ENCODE measurements at regions of chr17 and their contacts with region 1.

Region 1: DNA sequence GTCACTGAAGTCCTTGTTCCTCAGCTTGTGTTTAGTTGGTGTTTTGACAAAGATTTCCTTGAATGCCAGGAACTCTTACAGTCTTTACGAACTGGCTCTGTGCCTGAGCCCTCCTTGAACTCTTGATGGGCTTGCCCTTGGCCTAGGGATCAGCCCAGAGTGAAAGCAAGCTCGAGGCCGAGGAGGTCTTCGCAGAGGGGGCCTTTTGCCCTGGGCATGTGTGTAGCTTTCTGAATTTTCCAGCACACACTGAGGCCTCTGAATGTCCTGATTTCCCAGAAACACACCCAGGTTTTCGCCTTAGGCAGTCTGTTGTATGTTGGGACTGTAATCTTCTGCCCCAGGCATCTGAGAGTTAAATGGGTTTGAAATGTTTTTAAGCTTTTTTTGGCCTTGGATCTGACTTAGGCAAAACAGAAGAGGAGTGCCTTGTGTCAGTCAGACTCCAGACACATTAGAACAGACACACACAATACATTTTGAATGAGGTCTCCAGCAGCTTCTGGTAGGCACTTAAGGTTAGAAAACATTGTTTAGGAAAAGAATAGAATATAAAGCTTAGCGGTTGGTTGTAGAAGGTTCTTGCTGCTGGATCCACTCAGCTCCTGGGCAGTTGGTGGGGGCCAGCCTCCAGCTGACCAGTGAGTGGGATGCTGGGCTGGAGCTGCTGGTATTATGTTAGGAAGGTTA is 17.1 kb downstream of the FOXK2 start:
- DNase-seq: no peak
- ATAC-seq: no peak
- H3K4me3 Mint-ChIP-seq: peak overlapping the region in 4 of 10 donors; percentile 9 to 48 (median 36)
- H3K27ac Mint-ChIP-seq: peak overlapping the region in 6 of 10 donors; percentile 17 to 73 (median 44)
- H3K4me1 Mint-ChIP-seq: peaks cover 33 to 67% (median 62%) of the 10 kb centered on the region in 4 donors
- H3K27me3 Mint-ChIP-seq: no peaks in the 10 kb centered on the region

Region 2: DNA sequence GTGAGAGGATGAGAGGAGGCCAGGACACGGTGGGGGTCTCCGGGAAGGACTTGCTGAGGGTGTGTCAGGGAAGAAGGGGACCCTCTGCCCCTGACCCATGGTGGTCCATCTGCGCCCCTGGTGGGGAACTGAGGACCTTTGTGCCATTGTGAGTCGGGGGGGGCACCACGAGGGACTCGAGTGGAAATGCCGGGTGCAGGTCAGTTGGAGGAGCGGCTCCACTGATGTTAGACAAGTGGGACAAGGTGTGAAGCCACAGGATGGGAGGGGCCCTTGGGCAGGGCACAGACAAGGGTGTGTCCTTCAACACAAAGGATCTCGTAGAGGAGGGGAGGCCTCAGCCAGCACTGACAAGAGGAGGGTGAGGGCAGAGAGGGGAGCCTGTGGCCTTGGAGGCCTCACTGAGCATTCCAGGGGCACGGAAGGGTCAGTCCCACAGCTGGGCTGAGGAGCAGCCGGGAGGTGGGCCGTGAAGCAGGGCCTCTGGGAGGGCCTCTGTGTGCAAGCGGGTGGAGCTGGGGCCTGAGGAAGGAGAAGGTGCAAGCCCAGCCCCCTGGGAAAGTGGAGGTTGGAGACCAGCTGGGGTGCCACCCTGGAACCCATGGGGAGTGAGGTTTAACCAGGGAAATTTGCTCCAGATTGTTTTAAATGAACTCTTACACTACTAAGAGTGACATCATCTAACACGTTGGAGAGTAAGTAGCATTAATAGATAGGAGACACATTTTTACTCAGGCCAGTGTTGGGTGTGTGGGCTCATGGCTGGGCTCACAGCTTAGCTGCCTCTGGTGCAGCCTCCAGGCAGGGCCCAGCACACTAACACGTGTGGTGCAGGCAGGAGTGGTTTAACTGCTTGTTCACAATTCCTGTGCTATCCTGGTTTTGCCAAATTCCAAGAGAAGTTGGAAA is 50.2 kb before region 1 on chr17:
- POLR2A ChIA-PET with region 1: no interaction called
- DNase-seq: no peak
- ATAC-seq: no peak
- H3K4me3 Mint-ChIP-seq: no peak overlapping the region
- H3K27ac Mint-ChIP-seq: peak overlapping the region in 6 of 10 donors; percentile 20 to 83 (median 45)
- H3K4me1 Mint-ChIP-seq: peaks cover 2 to 13% (median 8%) of the 10 kb centered on the region in 4 donors
- H3K27me3 Mint-ChIP-seq: no peaks in the 10 kb centered on the region

Region 3: DNA sequence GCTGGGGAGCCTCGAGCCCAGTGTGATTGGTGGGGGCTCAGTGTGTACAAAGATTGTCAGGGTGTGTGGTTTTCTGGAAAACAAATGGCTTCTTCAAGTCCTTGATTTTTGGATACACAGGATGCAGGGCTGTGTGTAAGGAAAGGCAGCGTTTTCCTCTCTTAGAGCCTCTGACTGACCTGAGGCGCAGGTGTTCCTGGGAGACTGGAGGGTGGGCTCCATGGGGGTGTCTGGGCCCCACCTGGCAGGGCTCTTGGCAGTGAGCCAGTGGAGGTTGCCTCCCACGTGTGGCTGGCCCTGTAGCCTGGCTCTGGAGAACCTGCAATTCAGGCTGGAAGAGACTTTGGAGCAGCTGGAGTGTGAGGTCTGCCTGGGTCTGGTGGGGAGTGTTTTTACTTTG is 12.1 kb before region 1 on chr17:
- POLR2A ChIA-PET with region 1: interaction called, 12 read pairs
- DNase-seq: no peak
- ATAC-seq: no peak
- H3K4me3 Mint-ChIP-seq: peak overlapping the region in 6 of 10 donors; percentile 11 to 59 (median 40)
- H3K27ac Mint-ChIP-seq: peak overlapping the region in 7 of 10 donors; percentile 16 to 85 (median 56)
- H3K4me1 Mint-ChIP-seq: peaks cover 35 to 70% (median 65%) of the 10 kb centered on the region in 4 donors
- H3K27me3 Mint-ChIP-seq: no peaks in the 10 kb centered on the region